AG04450 (cell line): ENCODE measurements at regions of chr13 and their contacts with region 1.

Region 1: GRCh38 chr13:72808917-72809500 is 27.1 kb downstream of the PIBF1 start:
- DNase-seq: no peak
- H3K4me3 ChIP-seq: no peak overlapping the region
- H3K27ac ChIP-seq: no peak overlapping the region
- H3K27me3 ChIP-seq: no peaks in the 10 kb centered on the region
- CTCF ChIP-seq: peak; percentile 53

Region 2: GRCh38 chr13:72643311-72643989 is 165.6 kb before region 1 on chr13:
- CTCF ChIA-PET with region 1: interaction called, 12 read pairs
- POLR2A ChIA-PET with region 1: no interaction called
- DNase-seq: peak; percentile 2
- H3K4me3 ChIP-seq: no peak overlapping the region
- H3K27ac ChIP-seq: no peak overlapping the region
- H3K27me3 ChIP-seq: no peaks in the 10 kb centered on the region
- CTCF ChIP-seq: peak; percentile 83

Region 3: DNA sequence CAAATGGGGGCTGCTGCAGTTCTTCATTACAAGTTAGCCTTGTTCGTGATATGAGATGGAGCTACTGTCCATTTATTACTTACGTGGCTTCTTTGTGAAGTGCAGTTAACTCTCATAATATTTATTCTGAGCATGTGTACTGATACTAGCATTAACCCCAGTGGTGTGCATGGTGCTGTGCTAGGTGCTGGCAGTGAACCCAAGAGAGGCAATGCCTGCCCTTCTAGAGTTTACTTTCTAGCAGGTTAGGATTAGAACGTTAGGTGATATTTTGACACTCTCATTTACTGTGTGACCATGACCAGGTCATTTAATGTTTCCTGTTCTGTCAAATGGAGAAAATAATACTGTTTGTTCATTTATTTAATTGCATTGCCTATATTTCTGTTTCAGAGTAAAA is 10.2 kb before region 1 on chr13:
- CTCF ChIA-PET with region 1: interaction called, 20 read pairs
- POLR2A ChIA-PET with region 1: no interaction called
- DNase-seq: no peak
- H3K4me3 ChIP-seq: no peak overlapping the region
- H3K27ac ChIP-seq: no peak overlapping the region
- H3K27me3 ChIP-seq: no peaks in the 10 kb centered on the region
- CTCF ChIP-seq: no peak

Region 4: GRCh38 chr13:73250061-73250460 is 441.1 kb after region 1 on chr13:
- CTCF ChIA-PET with region 1: interaction called, 10 read pairs
- POLR2A ChIA-PET with region 1: no interaction called
- DNase-seq: no peak
- H3K4me3 ChIP-seq: no peak overlapping the region
- H3K27ac ChIP-seq: no peak overlapping the region
- H3K27me3 ChIP-seq: peaks cover 2% of the 10 kb centered on the region
- CTCF ChIP-seq: no peak

Region 5: DNA sequence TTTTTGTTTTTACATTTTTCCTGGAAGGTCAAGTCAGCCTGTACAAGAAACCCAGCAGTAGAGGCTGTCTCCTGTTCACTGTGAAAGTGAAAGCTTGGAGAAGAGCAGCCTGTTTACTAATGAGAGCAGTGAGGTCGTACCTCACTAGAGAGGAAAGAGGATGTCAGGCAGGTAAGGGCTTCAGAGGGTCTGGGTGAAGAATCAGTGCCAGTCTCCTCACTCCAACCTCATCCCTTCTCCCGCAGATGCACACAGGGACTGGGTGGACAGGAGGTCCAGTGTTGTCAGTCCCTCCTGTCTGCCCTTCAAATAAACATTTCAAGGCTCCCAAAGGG is 712.2 kb after region 1 on chr13:
- CTCF ChIA-PET with region 1: interaction called, 10 read pairs
- POLR2A ChIA-PET with region 1: no interaction called
- DNase-seq: no peak
- H3K4me3 ChIP-seq: no peak overlapping the region
- H3K27ac ChIP-seq: no peak overlapping the region
- H3K27me3 ChIP-seq: peaks cover 2% of the 10 kb centered on the region
- CTCF ChIP-seq: no peak